ENCODE measurements at regions of chr14 and their contacts with region 1.

Region 1: DNA sequence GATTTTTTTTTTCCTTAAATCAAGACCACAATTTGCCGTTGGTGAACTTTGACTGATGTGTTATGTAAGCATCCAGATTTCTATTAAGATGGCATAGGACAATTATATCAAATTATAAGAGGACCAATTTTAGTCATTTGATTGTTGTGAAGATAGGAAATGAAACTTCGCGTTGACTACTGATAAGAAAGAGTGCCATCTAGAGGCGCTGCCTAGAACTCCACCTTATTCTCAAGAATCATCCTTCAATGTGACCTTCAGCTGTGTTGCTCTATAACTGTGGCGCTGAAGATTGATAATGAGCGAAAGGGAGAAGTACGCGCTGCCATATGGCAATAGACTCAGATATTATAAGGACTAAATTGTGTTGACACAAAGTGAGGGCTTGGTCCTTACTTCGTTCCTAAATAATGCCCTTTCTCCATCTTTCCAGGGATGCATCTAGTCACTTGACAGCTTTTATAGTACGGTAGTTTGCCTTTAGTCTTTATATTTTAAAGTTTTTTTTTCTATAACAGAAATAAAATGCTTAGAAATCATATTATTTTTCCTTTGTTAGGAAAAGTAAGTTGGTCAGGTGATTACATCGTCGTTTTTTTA is 350.8 kb upstream of the STXBP6 start:
- DNase-seq: peak in 1 of 2 donors; percentile 75
- ATAC-seq: peak; percentile 81

Region 2: GRCh38 chr14:24710403-24711112 is 690.1 kb before region 1 on chr14:
- intact Hi-C with region 1: loop called in 1 of 2 experiments (anchors 10 kb)
- DNase-seq: peak in 1 of 2 donors; percentile 43
- ATAC-seq: peak; percentile 67

Measured in left colon (tissue), 2 donors.